Activated B cell treated with CpG ODN at 0.5 μM for 24 hours (primary cell): ENCODE measurements at regions of chr4 and their contacts with region 1.

Region 1: GRCh38 chr4:75708218-75708691 is 16.1 kb upstream of the USO1 start:
- DNase-seq: no peak
- ATAC-seq: peak; percentile 85
- H3K4me3 Mint-ChIP-seq: no peak overlapping the region
- H3K27ac Mint-ChIP-seq: peak overlapping the region; percentile 21
- H3K4me1 Mint-ChIP-seq: peaks cover 12% of the 10 kb centered on the region
- H3K27me3 Mint-ChIP-seq: no peaks in the 10 kb centered on the region
- CTCF ChIP-seq: no peak

Region 2: GRCh38 chr4:75849461-75849860 is 141.2 kb after region 1 on chr4:
- CTCF ChIA-PET with region 1: interaction called, 5 read pairs
- POLR2A ChIA-PET with region 1: no interaction called
- intact Hi-C with region 1: loop called (anchors 5 kb)
- DNase-seq: no peak
- ATAC-seq: no peak
- H3K4me3 Mint-ChIP-seq: no peak overlapping the region
- H3K27ac Mint-ChIP-seq: no peak overlapping the region
- H3K4me1 Mint-ChIP-seq: peaks cover 5% of the 10 kb centered on the region
- H3K27me3 Mint-ChIP-seq: peaks cover 7% of the 10 kb centered on the region
- CTCF ChIP-seq: no peak